HepG2 (cell line): ENCODE measurements at regions of chr14 and their contacts with region 1.

Region 1: GRCh38 chr14:51219473-51220448 is 20.3 kb upstream of the TMX1 start:
- DNase-seq: peak; percentile 7
- ATAC-seq: no peak
- H3K4me3 ChIP-seq: no peak overlapping the region
- H3K27ac ChIP-seq: no peak overlapping the region
- H3K4me1 ChIP-seq: no peaks in the 10 kb centered on the region
- H3K27me3 ChIP-seq: no peaks in the 10 kb centered on the region
- CTCF ChIP-seq: peak; percentile 36; the same call in 1 of the 2 replicates
- EP300 ChIP-seq: no peak
- POLR2A ChIP-seq: no peak
- RAD21 ChIP-seq: no peak

Region 2: GRCh38 chr14:50607181-50607580 is 612.6 kb before region 1 on chr14:
- CTCF ChIA-PET with region 1: no interaction called
- POLR2A ChIA-PET with region 1: no interaction called
- in situ Hi-C with region 1: no loop called
- intact Hi-C with region 1: no loop called
- DNase-seq: no peak
- ATAC-seq: no peak
- H3K4me3 ChIP-seq: no peak overlapping the region
- H3K27ac ChIP-seq: no peak overlapping the region
- H3K4me1 ChIP-seq: peaks cover 7% of the 10 kb centered on the region
- H3K27me3 ChIP-seq: no peaks in the 10 kb centered on the region
- CTCF ChIP-seq: no peak
- EP300 ChIP-seq: no peak
- POLR2A ChIP-seq: no peak
- RAD21 ChIP-seq: no peak

Region 3: GRCh38 chr14:50999726-51000125 is 220.0 kb before region 1 on chr14:
- CTCF ChIA-PET with region 1: no interaction called
- POLR2A ChIA-PET with region 1: no interaction called
- in situ Hi-C with region 1: no loop called
- intact Hi-C with region 1: loop called (anchors 5 kb)
- DNase-seq: peak; percentile 5
- ATAC-seq: peak; percentile 70
- H3K4me3 ChIP-seq: no peak overlapping the region
- H3K27ac ChIP-seq: no peak overlapping the region
- H3K4me1 ChIP-seq: peaks cover 16% of the 10 kb centered on the region
- H3K27me3 ChIP-seq: peaks cover 0 to 15% of the 10 kb centered on the region in 2 experiments; a peak in 2 of 5 replicates
- CTCF ChIP-seq: peak; percentile 56
- EP300 ChIP-seq: no peak
- POLR2A ChIP-seq: no peak
- RAD21 ChIP-seq: no peak

Region 4: GRCh38 chr14:51129130-51129529 is 90.6 kb before region 1 on chr14:
- CTCF ChIA-PET with region 1: no interaction called
- POLR2A ChIA-PET with region 1: no interaction called
- in situ Hi-C with region 1: no loop called
- intact Hi-C with region 1: no loop called
- DNase-seq: peak; percentile 8
- ATAC-seq: peak; percentile 98
- H3K4me3 ChIP-seq: no peak overlapping the region
- H3K27ac ChIP-seq: no peak overlapping the region
- H3K4me1 ChIP-seq: no peaks in the 10 kb centered on the region
- H3K27me3 ChIP-seq: no peaks in the 10 kb centered on the region; a peak in 1 of 5 replicates
- CTCF ChIP-seq: peak; percentile 42
- EP300 ChIP-seq: no peak
- POLR2A ChIP-seq: no peak
- RAD21 ChIP-seq: no peak

Region 5: DNA sequence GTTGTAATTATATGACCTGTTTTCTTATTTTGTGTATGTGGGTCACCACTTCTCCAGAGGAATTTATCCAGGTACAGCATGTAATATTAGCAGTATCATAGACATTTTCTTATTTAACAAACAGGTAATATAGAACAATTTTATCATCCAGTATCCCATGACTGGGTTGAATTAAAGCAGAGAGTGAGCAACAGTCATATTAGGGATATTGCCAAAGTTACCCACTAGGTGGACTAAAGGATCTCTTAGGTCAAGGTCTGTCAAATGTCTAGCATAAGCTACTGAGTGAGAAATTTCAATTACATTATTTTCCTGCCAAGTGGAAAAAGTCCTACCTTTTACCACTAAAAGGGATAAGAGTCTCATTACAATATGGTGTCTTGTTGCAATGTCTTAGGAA is 62.7 kb before region 1 on chr14:
- CTCF ChIA-PET with region 1: interaction called, 4 read pairs
- POLR2A ChIA-PET with region 1: no interaction called
- in situ Hi-C with region 1: no loop called
- intact Hi-C with region 1: loop called (anchors 5 kb)
- DNase-seq: peak; percentile 10
- ATAC-seq: peak; percentile 65
- H3K4me3 ChIP-seq: no peak overlapping the region
- H3K27ac ChIP-seq: no peak overlapping the region
- H3K4me1 ChIP-seq: no peaks in the 10 kb centered on the region
- H3K27me3 ChIP-seq: no peaks in the 10 kb centered on the region; a peak in 1 of 5 replicates
- CTCF ChIP-seq: peak; percentile 15; the same call in 1 of the 2 replicates
- EP300 ChIP-seq: no peak
- POLR2A ChIP-seq: no peak
- RAD21 ChIP-seq: no peak